Naive thymus-derived CD4-positive, alpha-beta T cell (primary cell): ENCODE measurements at regions of chr11 and their contacts with region 1.

Region 1: GRCh38 chr11:18203723-18204122 is 31.1 kb downstream of the MRGPRX4 start:
- DNase-seq: no peak
- ATAC-seq: no peak
- H3K4me3 ChIP-seq: no peak overlapping the region
- H3K4me3 Mint-ChIP-seq: no peak overlapping the region
- H3K27ac ChIP-seq: no peak overlapping the region
- H3K27ac Mint-ChIP-seq: no peak overlapping the region
- H3K4me1 ChIP-seq: no peaks in the 10 kb centered on the region
- H3K4me1 Mint-ChIP-seq: no peaks in the 10 kb centered on the region
- H3K27me3 ChIP-seq: no peaks in the 10 kb centered on the region
- H3K27me3 Mint-ChIP-seq: peaks cover 52 to 74% (median 58%) of the 10 kb centered on the region in 5 donors

Region 2: GRCh38 chr11:17986711-17987220 is 217.0 kb before region 1 on chr11:
- CTCF ChIA-PET with region 1: no interaction called
- POLR2A ChIA-PET with region 1: interaction called, 10 read pairs
- intact Hi-C with region 1: no loop called
- DNase-seq: no peak
- ATAC-seq: no peak
- H3K4me3 ChIP-seq: no peak overlapping the region
- H3K4me3 Mint-ChIP-seq: no peak overlapping the region
- H3K27ac ChIP-seq: no peak overlapping the region
- H3K27ac Mint-ChIP-seq: no peak overlapping the region
- H3K4me1 ChIP-seq: no peaks in the 10 kb centered on the region
- H3K4me1 Mint-ChIP-seq: peaks cover 0 to 2% (median under 1%) of the 10 kb centered on the region in 7 donors
- H3K27me3 ChIP-seq: no peaks in the 10 kb centered on the region
- H3K27me3 Mint-ChIP-seq: no peaks in the 10 kb centered on the region

Region 3: GRCh38 chr11:18221274-18221876 is 17.7 kb after region 1 on chr11:
- CTCF ChIA-PET with region 1: no interaction called
- POLR2A ChIA-PET with region 1: no interaction called
- intact Hi-C with region 1: no loop called
- DNase-seq: no peak
- ATAC-seq: no peak
- H3K4me3 ChIP-seq: no peak overlapping the region
- H3K4me3 Mint-ChIP-seq: no peak overlapping the region
- H3K27ac ChIP-seq: no peak overlapping the region
- H3K27ac Mint-ChIP-seq: no peak overlapping the region
- H3K4me1 ChIP-seq: no peaks in the 10 kb centered on the region
- H3K4me1 Mint-ChIP-seq: no peaks in the 10 kb centered on the region
- H3K27me3 ChIP-seq: no peaks in the 10 kb centered on the region
- H3K27me3 Mint-ChIP-seq: peaks cover 0 to 34% (median 14%) of the 10 kb centered on the region in 5 donors

Region 4: DNA sequence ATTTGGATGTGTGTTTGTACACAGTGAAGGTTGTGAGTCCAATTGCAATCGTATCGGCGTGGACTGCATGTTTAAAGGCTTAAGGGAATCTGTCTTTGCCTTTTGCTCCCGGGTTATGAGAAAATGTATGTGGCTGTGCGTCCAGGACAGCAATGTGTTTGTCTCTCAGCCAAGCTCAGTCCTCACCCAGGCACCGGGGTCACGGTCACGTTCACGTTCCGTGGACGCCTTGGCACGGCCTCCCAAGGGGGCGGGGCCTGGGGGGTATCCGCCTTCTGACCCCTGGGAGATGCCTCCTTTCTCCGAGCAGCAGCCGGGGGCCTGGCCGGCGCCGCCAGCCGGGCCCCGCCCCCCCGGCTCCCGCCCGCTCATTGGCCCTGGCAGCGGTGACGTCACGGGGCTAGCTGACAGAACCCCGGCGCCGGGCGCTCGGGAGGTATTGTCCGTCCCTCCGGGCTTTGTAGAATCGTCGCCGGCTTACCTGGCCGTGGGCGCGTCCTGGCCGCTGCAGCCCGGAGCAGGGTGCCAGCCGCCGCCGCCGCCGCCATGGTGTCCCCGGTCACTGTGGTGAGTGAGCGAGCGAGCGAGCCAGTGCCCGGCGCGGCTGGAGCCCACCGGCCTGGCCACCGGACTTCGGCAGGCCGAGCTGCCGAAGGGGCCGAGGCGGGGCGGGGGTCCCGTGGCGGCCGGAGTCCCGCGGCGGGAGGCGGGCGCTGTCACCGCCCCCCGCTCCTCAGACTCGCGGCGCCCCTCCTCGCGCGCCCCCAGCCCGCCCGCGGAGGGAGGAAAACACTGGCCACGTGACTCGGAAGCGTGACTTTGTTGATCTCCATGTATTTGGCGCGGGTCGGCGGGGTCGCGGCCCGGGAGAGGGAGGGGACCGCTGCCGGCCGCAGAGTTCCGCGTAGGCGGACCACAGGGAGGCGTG is 494.9 kb after region 1 on chr11 and contains the start of gene TMEM86A:
- CTCF ChIA-PET with region 1: no interaction called
- POLR2A ChIA-PET with region 1: no interaction called
- intact Hi-C with region 1: no loop called
- DNase-seq: peak; percentile 81 to 89 (median 87)
- ATAC-seq: peak; percentile 97
- H3K4me3 ChIP-seq: peak within 1 kb of the TSS; percentile 42
- H3K4me3 Mint-ChIP-seq: peak within 1 kb of the TSS; percentile 76 to 89 (median 84)
- H3K27ac ChIP-seq: peak within 1 kb of the TSS; percentile 72
- H3K27ac Mint-ChIP-seq: peak within 1 kb of the TSS; percentile 42 to 95 (median 89)
- H3K4me1 ChIP-seq: peaks cover 6% of the 10 kb centered on the region in 2 donors
- H3K4me1 Mint-ChIP-seq: peaks cover 14 to 27% (median 20%) of the 10 kb centered on the region in 7 donors
- H3K27me3 ChIP-seq: no peaks in the 10 kb centered on the region
- H3K27me3 Mint-ChIP-seq: peaks cover 0 to 39% (median 0%) of the 10 kb centered on the region in 5 donors
- total RNA-seq, gene TMEM86A: 0.53 to 6.5 (median 5.5) TPM